ENCODE measurements at regions of chr16 and their contacts with region 1.

Region 1: GRCh38 chr16:58119509-58119845 is 9.7 kb downstream of the CFAP20 start:
- DNase-seq: no peak
- CTCF ChIP-seq: no peak

Region 2: DNA sequence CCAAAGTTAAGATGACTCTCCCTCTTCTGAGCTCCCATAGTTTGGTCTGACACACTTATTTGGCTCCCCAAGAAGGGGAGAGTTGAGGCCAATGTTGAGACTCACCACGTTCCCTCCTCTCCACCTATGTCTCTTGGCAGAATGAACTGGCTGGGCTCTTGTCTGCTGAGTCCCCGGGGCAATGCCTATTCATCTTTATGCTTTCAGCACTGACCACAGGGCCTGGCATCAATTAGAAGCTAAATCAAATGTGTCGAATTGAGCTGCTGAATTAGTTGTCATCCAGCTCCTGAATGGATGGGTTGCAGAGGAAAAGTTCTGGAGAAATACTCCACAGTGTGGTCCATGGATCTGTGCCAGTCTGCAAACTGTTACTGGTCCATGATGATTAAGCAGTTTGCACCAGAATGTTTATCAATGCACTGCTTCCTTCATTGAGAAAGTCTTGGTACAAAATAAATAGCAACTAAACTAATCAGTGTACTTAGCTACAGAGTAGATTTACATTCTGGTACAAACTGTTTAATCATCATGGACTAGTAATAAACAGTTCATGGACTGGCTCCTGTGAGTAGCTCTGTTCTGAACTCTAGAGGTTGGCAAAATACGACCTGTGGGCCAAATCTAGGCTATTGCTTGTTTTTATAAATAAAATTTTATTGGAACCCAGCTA is 153.2 kb before region 1 on chr16:
- CTCF ChIA-PET with region 1: no interaction called
- POLR2A ChIA-PET with region 1: no interaction called
- DNase-seq: no peak
- CTCF ChIP-seq: no peak

Region 3: DNA sequence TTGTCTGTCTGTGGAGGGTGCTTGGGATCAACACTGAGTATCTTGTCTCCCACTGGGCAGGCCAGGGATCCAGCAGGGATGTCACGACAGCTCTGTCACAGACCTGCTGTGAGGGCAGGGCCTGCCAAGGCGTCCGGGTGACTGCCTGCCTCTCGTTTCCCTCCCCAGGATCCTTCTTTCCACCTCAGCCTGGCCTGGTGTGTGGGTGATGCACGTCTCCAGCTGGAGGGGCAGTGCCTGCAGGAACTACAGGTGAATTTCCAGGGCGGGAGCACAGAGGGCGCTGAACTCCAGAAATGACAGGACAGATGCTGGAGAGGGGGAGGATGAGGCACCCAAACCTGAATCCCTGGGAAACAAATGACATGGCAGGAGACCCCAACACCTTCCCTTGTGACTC is 100.7 kb before region 1 on chr16:
- CTCF ChIA-PET with region 1: interaction called, 11 read pairs
- POLR2A ChIA-PET with region 1: no interaction called
- DNase-seq: no peak
- CTCF ChIP-seq: no peak

Region 4: DNA sequence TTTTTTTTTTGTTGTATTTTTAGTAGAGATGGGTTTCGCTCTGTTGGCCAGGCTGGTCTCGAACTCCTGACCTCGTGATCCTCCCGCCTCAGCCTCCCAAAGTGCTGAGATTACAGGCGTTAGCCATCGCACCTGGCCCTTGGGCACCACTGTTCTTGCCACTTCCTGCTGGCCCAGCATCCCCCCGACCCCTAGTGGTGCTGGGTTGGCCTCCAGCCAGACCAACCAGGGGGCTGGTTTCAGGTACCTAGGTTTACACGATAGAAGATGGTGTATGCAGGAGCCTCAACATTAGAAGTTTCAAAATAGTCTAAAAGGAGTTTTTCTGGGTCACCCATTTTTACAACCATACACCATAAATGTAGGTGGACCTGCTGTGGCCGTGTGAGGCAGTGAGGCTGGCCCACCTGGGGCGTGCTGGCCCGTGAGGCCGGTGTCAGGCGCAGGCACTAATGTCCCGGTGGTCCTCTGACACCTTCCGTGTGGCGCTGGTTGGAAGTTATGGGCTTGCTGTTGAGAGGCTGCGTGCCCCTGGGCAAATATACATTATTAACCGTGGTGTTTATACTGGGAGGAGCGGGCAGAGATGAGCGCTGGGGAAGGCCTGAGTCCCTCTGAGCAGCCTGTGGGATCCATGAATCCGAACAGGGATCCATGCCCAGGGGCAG is 33.8 kb before region 1 on chr16:
- CTCF ChIA-PET with region 1: no interaction called
- POLR2A ChIA-PET with region 1: no interaction called
- DNase-seq: no peak
- CTCF ChIP-seq: no peak

Region 5: DNA sequence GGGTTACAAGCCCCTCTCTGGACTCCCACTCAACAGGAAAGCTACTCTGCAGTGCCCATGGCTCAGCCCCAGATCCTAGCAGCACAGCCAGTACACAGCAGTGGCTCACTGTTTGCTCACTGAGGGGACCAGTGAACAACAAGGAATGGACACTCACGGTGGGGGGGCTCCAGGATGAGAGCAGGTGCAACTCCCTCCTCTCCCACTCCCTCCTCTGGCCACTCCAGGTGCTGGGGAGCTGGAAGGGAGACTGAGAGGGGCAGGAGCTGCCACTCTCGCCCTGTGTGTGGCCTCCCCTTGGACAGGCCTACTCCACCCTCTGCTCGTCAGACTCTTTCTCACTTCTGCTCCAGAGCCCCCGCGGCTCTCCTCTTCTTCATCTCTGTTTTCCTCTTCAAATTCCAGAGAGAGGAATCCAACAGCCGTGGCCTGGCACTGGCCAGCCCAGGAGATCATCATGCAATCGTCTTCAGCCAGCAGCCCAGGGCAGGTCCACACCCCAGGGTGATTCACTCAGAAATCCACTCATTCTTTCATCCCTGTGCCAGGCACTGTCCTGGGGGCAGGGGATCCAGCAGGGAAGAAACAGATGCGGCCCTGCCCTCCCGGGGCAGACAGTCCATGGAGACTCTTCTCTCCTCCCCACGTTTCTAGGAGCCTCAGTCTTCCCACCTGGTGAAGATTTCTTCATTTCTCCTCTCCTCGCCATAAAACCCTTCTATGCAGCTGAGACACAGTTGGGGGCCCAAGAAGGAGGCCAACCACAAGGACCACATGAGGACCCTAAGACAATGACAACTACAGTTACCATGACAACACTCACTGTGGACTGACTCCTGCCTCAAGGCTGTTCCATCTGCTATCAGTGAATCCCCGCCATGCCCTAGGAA is 21.0 kb before region 1 on chr16:
- CTCF ChIA-PET with region 1: interaction called, 10 read pairs
- POLR2A ChIA-PET with region 1: no interaction called
- DNase-seq: no peak
- CTCF ChIP-seq: no peak

Region 6: GRCh38 chr16:58105631-58106030 is 13.8 kb before region 1 on chr16:
- CTCF ChIA-PET with region 1: interaction called, 12 read pairs
- POLR2A ChIA-PET with region 1: interaction called, 3 read pairs
- DNase-seq: no peak
- CTCF ChIP-seq: no peak

Region 7: DNA sequence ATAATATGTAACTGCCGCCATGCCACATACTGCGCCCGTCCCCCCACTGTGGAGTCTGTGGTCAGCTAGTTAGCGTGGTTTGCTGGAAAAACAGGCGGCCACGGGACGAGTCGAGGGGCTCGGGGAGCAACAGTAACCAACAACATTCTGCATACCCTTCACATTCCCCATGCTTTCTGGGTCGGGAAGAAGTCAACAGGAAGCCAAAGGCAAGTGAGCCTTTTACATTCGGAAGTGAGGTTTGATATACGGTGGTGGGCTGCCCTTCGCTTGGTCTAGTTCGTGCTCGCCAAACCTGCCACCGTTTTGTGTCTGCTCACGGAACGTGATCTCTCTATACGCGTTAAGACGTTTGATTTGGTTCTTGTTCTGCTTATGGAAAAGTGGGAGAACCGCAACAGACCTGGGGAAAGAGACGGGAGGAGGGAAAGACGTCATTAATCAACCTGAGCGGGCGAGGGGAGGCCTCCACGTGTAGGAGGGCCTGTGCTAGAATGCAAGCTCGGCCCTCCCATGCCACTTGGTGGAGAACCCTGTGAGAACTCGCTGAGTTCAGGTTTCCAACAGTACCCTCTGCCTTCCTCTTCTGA is 38.6 kb after region 1 on chr16:
- CTCF ChIA-PET with region 1: no interaction called
- POLR2A ChIA-PET with region 1: no interaction called
- DNase-seq: no peak
- CTCF ChIP-seq: no peak

Region 8: GRCh38 chr16:58222532-58223316 is 103.2 kb after region 1 on chr16:
- CTCF ChIA-PET with region 1: no interaction called
- POLR2A ChIA-PET with region 1: no interaction called
- DNase-seq: no peak
- CTCF ChIP-seq: no peak